CD8-positive, alpha-beta T cell (primary cell): ENCODE measurements at regions of chr20 and their contacts with region 1.

Region 1: DNA sequence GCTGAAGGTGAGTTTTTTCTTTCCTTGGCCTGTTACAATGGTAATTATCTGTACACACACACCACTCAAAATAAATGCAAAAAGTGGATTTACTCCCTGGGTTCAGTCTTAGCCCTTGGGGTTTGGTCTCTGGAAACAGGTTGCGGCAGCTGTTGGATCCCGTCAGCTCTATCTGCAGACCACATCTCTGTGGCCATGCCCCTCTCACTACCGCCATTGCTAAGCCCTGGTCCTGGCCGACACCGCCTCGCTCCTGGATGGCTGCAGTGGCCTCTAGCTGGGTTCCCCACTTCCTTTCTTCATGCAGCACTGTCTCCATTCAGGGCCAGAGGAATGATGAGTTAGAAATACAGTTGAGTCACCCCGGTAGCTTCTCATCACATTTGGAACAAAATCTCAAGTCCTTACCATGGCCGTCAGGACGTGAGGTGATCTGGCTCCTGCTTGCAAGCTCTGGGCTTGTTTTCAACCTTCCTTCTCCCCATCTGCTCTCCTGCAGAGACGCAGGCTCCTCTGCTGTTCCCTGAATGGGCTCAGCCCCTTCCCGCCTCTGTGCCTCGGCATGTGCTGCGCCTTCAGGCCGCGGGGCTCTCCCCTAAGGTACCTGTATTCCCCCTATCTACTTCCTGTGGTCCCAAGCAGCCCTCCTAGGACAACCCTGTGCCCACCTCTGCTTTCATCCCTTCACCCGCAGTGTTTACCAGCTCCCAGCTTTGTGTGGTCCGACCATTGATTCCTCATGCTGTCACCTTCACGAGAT is 38.0 kb downstream of the EFCAB8 start:
- DNase-seq: no peak
- ATAC-seq: no peak
- H3K4me3 ChIP-seq: no peak overlapping the region
- H3K4me3 Mint-ChIP-seq: no peak overlapping the region
- H3K27ac ChIP-seq: no peak overlapping the region
- H3K27ac Mint-ChIP-seq: no peak overlapping the region
- H3K4me1 ChIP-seq: no peaks in the 10 kb centered on the region
- H3K4me1 Mint-ChIP-seq: no peaks in the 10 kb centered on the region
- H3K27me3 ChIP-seq: no peaks in the 10 kb centered on the region
- H3K27me3 Mint-ChIP-seq: no peaks in the 10 kb centered on the region
- CTCF ChIP-seq: no peak

Region 2: GRCh38 chr20:33097001-33097400 is 200.3 kb after region 1 on chr20:
- CTCF ChIA-PET with region 1: interaction called, 39 read pairs
- POLR2A ChIA-PET with region 1: no interaction called
- intact Hi-C with region 1: no loop called
- DNase-seq: no peak
- ATAC-seq: no peak
- H3K4me3 ChIP-seq: no peak overlapping the region
- H3K4me3 Mint-ChIP-seq: no peak overlapping the region
- H3K27ac ChIP-seq: no peak overlapping the region
- H3K27ac Mint-ChIP-seq: no peak overlapping the region
- H3K4me1 ChIP-seq: peaks cover 3% of the 10 kb centered on the region
- H3K4me1 Mint-ChIP-seq: peaks cover 3% of the 10 kb centered on the region
- H3K27me3 ChIP-seq: no peaks in the 10 kb centered on the region
- H3K27me3 Mint-ChIP-seq: no peaks in the 10 kb centered on the region
- CTCF ChIP-seq: no peak